ENCODE measurements at regions of chrX and their contacts with region 1.

Region 1: DNA sequence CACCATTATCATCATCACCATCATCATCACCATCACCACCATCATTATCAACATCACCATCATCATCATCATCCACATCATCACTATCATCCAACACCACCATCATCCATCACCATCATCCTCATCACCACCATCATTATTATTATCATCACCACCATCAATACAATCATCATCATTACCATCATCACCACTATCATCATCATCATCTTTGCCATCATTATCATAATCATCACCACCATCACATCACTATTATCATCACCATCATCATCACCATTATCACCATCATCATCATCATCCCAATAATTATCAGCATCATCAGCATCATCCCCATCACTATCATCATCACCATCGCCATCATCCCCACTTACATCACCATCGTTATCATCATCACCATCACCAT is 1021.8 kb upstream of the PRKX start:
- DNase-seq: no peak
- ATAC-seq: no peak
- H3K4me3 ChIP-seq: no peak overlapping the region
- H3K27ac ChIP-seq: no peak overlapping the region
- H3K4me1 ChIP-seq: no peaks in the 10 kb centered on the region
- H3K27me3 ChIP-seq: no peaks in the 10 kb centered on the region
- CTCF ChIP-seq: no peak
- POLR2A ChIP-seq: no peak

Region 2: GRCh38 chrX:4484266-4484665 is 251.0 kb before region 1 on chrX:
- intact Hi-C with region 1: loop called in 1 of 10 experiments (anchors 10 kb)
- DNase-seq: no peak
- ATAC-seq: no peak
- H3K4me3 ChIP-seq: no peak overlapping the region
- H3K27ac ChIP-seq: no peak overlapping the region
- H3K4me1 ChIP-seq: no peaks in the 10 kb centered on the region
- H3K27me3 ChIP-seq: no peaks in the 10 kb centered on the region
- CTCF ChIP-seq: no peak
- POLR2A ChIP-seq: no peak

Region 3: GRCh38 chrX:4674032-4674782 is 61.1 kb before region 1 on chrX:
- intact Hi-C with region 1: no loop called
- DNase-seq: no peak
- ATAC-seq: no peak
- H3K4me3 ChIP-seq: no peak overlapping the region
- H3K27ac ChIP-seq: no peak overlapping the region
- H3K4me1 ChIP-seq: no peaks in the 10 kb centered on the region
- H3K27me3 ChIP-seq: no peaks in the 10 kb centered on the region
- CTCF ChIP-seq: no peak
- POLR2A ChIP-seq: no peak

Measured in heart left ventricle (tissue), 16 donors.